ENCODE measurements at regions of chr19 and their contacts with region 1.

Region 1: DNA sequence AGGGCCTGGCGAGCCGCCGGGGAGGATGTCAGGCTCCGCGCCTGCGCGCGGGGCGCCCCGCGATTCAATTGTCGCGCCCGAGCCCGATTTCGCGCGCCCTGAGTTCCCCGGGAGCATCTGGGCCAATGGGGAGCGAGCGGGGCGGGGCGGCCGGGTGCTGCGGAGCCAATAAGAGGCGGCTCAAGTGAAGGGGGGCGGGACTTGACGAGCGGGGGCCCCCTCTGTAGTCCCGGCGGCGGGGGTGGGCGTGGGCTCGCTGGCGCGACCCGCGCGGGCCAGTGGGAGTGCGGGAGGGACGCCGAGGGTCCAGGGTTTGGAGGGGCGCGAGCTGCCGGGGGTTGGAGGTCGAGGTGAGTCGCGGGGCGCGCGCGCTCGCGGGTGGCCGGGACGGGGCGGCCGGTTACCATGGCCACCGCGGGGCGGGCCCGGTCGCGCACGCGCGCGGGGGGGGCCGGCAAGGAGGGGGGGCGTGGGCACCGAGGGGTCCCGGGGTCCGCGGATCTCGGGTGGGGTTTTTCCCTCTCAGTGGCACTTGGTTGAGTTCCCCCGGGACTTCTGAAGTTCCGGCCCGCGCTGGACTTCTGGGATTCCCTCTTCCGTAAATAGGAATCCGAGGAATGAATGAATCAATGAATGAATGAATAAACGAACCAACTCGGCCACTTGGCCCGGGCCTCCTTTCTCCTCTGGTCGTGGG is 744 bp downstream of the UHRF1 start:
- DNase-seq: peak; percentile 51
- ATAC-seq: peak; percentile 90
- H3K4me3 ChIP-seq: peak overlapping the region; percentile 99
- H3K27ac ChIP-seq: peak overlapping the region; percentile 78
- H3K4me1 ChIP-seq: peaks cover 29% of the 10 kb centered on the region
- H3K27me3 ChIP-seq: no peaks in the 10 kb centered on the region
- CTCF ChIP-seq: no peak
- EP300 ChIP-seq: no peak
- POLR2A ChIP-seq: peak; percentile 56; the same call in 1 of the 2 replicates
- RAD21 ChIP-seq: no peak

Region 2: GRCh38 chr19:4694209-4694987 is 215.6 kb before region 1 on chr19:
- CTCF ChIA-PET with region 1: no interaction called
- POLR2A ChIA-PET with region 1: no interaction called
- RAD21 ChIA-PET with region 1: no interaction called
- SMC1A ChIA-PET with region 1: no interaction called
- in situ Hi-C with region 1: no loop called
- intact Hi-C with region 1: no loop called
- DNase-seq: no peak
- ATAC-seq: no peak
- H3K4me3 ChIP-seq: no peak overlapping the region
- H3K27ac ChIP-seq: no peak overlapping the region
- H3K4me1 ChIP-seq: no peaks in the 10 kb centered on the region
- H3K27me3 ChIP-seq: no peaks in the 10 kb centered on the region
- CTCF ChIP-seq: no peak
- EP300 ChIP-seq: no peak
- POLR2A ChIP-seq: no peak
- RAD21 ChIP-seq: no peak

Region 3: DNA sequence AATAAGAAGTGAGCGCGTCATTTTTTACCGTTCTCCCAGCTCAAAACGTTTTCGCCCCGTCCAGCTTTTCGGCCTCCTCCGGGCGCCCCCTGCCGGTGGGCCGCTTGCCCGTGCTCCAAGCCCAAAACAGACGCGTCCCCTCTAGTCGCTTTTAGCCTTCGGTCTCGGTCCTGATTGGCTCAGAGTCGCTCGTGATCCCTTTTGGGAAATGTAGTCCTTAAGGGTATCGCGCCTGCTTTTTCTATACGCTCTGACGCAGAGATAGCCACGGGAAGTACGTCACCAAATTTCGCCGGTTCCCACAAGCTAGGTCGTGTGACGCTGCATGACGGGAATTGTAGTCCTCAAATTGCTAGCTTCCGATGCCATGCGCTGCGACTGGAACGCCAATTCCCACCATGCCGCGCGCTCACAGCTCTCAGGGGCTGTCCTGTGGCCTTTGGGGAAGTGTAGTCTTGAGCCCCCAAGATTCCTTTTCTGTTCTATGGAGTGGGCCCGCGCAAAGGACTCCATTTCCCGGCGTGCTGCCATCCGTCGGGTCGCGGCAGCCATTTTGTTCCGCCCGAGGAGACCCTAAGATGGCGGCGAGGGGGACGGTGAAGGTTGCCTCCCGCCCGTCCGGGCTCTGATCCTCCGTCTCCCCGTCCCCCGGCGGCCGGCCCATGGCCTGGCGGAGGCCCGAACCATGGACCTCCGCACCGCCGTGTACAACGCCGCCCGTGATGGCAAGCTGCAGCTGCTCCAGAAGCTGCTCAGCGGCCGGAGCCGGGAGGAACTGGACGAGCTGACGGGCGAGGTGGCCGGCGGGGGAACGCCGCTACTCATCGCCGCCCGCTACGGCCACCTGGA is 118.7 kb before region 1 on chr19 and contains the start of gene FEM1A:
- CTCF ChIA-PET with region 1: interaction called, 9 read pairs
- POLR2A ChIA-PET with region 1: interaction called, 4 read pairs
- RAD21 ChIA-PET with region 1: interaction called, 17 read pairs
- SMC1A ChIA-PET with region 1: no interaction called
- in situ Hi-C with region 1: no loop called
- intact Hi-C with region 1: no loop called
- DNase-seq: peak; percentile 100
- ATAC-seq: peak; percentile 98
- H3K4me3 ChIP-seq: peak within 1 kb of the TSS; percentile 76
- H3K27ac ChIP-seq: peak within 1 kb of the TSS; percentile 93
- H3K4me1 ChIP-seq: peaks cover 22% of the 10 kb centered on the region
- H3K27me3 ChIP-seq: no peaks in the 10 kb centered on the region
- CTCF ChIP-seq: peak; percentile 98 to 99 (median 99); a peak in 5 of 6 replicates
- EP300 ChIP-seq: no peak
- POLR2A ChIP-seq: peak; percentile 89
- RAD21 ChIP-seq: peak; percentile 72
- polyA plus RNA-seq, gene FEM1A: 0.27 to 0.31 TPM

Region 4: GRCh38 chr19:4831304-4831978 is 78.6 kb before region 1 on chr19 and contains the start of gene TICAM1:
- CTCF ChIA-PET with region 1: interaction called, 5 read pairs
- POLR2A ChIA-PET with region 1: interaction called, 5 read pairs
- RAD21 ChIA-PET with region 1: interaction called, 16 read pairs
- SMC1A ChIA-PET with region 1: no interaction called
- in situ Hi-C with region 1: no loop called
- intact Hi-C with region 1: no loop called
- DNase-seq: no peak
- ATAC-seq: peak; percentile 80
- H3K4me3 ChIP-seq: peak within 1 kb of the TSS; percentile 95
- H3K27ac ChIP-seq: peak within 1 kb of the TSS; percentile 92
- H3K4me1 ChIP-seq: no peaks in the 10 kb centered on the region
- H3K27me3 ChIP-seq: no peaks in the 10 kb centered on the region
- CTCF ChIP-seq: no peak
- EP300 ChIP-seq: no peak; a peak in 1 of 4 replicates
- POLR2A ChIP-seq: peak; percentile 86
- RAD21 ChIP-seq: no peak
- polyA plus RNA-seq, gene TICAM1: 0.31 to 0.99 TPM

Region 5: DNA sequence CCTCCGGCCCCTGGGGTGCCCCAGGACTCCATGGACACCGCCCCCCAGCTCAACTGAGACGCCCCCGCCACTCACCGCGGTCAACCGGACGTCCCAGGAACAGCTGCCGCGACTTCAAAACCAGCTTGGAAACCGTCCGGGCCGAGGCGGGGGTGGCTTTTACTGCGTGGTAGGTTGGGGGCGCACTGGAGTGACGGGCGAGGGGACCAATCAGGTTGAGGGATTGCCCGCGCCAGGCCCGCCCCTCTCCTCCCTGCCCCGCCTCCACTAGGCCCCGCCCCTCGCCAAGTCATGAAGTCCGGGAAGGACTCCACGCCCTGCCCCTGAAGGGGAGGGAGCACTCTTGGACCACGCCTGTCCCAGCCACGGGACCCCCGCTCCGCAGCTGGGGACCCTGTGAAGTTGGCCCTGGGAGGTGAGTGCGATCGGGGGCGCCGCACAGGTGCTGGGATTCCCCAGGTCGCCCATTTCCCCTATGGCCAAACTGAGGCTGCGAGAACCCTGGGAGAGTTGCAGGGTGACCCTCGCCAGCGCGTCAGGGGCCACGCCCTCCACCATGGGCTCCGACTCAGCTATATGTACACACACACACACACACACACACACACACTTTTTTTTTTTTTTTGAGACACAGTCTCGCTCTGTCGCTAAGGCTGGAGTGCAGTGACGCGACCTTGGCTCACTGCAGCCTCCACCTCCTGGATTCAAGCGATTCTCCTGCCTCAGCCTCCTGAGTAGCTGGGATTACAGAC is 42.3 kb before region 1 on chr19 and contains the start of gene PLIN3:
- CTCF ChIA-PET with region 1: interaction called, 171 read pairs
- POLR2A ChIA-PET with region 1: interaction called, 13 read pairs
- RAD21 ChIA-PET with region 1: interaction called, 79 read pairs
- SMC1A ChIA-PET with region 1: interaction called, 49 read pairs
- in situ Hi-C with region 1: loop called (anchors 5 kb)
- intact Hi-C with region 1: loop called (anchors 1 kb)
- DNase-seq: peak; percentile 65
- ATAC-seq: peak; percentile 86
- H3K4me3 ChIP-seq: peak within 1 kb of the TSS; percentile 98
- H3K27ac ChIP-seq: peak within 1 kb of the TSS; percentile 85
- H3K4me1 ChIP-seq: peaks cover 15% of the 10 kb centered on the region
- H3K27me3 ChIP-seq: no peaks in the 10 kb centered on the region
- CTCF ChIP-seq: no peak
- EP300 ChIP-seq: no peak
- POLR2A ChIP-seq: peak; percentile 74
- RAD21 ChIP-seq: no peak
- polyA plus RNA-seq, gene PLIN3: 7.7 to 19.0 TPM

Region 6: GRCh38 chr19:5031231-5032100 is 121.4 kb after region 1 on chr19:
- CTCF ChIA-PET with region 1: interaction called, 35 read pairs
- POLR2A ChIA-PET with region 1: no interaction called
- RAD21 ChIA-PET with region 1: interaction called, 6 read pairs
- SMC1A ChIA-PET with region 1: interaction called, 3 read pairs
- in situ Hi-C with region 1: no loop called
- intact Hi-C with region 1: loop called (anchors 2 kb)
- DNase-seq: peak; percentile 12
- ATAC-seq: peak; percentile 98
- H3K4me3 ChIP-seq: no peak overlapping the region
- H3K27ac ChIP-seq: no peak overlapping the region
- H3K4me1 ChIP-seq: peaks cover 7% of the 10 kb centered on the region
- H3K27me3 ChIP-seq: no peaks in the 10 kb centered on the region
- CTCF ChIP-seq: peak; percentile 92 to 97 (median 96); a peak in 5 of 6 replicates
- EP300 ChIP-seq: no peak
- POLR2A ChIP-seq: no peak
- RAD21 ChIP-seq: peak; percentile 90

Measured in GM12878 (cell line).